GM18951 (cell line): ENCODE measurements at regions of chr9 and their contacts with region 1.

Region 1: GRCh38 chr9:128034821-128035764 is 32.0 kb downstream of the NAIF1 start:
- POLR2A ChIP-seq: no peak

Region 2: GRCh38 chr9:127955294-127956035 is 79.6 kb before region 1 on chr9:
- in situ Hi-C with region 1: loop called (anchors 5 kb)
- POLR2A ChIP-seq: no peak

Region 3: DNA sequence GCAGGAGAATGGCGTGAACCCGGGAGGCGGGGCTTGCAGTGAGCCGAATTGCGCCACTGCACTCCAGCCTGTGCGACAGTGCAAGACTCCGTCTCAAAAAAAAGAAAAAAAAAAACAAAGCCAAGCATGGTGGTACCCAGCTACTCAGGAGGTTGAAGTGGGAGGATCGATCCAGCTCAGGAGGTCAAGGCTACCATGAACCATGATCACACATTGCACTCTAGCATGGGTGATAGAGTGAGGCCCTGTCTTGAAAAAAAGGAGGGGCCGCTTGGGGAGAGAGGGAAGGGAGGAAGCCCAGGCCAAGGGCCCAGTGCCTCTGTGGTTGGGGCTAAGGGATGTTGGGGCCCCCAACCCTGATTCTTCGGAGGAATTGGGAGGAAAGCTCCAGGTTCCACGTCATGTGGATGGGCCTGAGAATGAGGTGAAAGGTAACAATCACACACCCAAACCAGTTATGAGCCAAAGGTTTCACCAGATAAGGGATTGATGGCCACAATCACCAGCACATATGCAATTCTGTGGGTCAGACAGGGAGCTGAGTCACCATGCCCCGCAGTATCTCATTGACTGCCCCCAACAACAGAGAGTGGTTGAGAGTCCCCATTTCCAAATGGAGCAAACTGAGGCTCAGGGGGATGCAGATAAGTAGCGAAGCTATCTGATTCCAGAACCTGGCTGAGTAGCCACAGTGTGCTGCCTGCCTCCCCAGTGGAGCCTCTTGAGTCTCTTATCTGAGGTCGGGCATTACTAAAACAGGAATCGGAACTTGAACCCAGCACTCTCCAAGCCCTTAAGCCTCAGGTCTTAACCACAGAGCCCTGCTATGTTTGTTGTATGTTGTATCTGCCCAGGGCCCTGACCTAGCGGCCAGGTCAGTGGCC is 261.5 kb after region 1 on chr9:
- in situ Hi-C with region 1: no loop called
- POLR2A ChIP-seq: no peak